ENCODE measurements at regions of chr13 and their contacts with region 1.

Region 1: DNA sequence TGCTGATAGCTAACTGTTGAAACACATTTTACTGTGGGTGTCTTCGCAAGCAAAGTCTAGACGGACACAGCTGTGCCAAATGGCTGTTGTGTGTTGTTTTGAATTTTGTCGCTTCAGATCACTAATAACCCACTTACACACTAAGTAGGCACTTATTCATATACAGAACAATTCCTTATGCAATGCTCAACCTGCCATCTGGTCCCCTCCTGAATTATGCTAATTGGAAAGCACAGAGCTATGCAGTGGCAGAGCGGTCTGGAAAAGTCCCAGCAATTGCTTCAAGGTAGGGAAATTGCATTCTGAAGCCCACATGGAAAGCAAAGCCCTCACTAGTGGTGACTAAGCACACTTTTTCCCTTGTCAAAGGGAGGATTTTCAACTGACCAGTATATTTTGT is 69.9 kb downstream of the C13orf42 start:
- DNase-seq: no peak
- H3K4me3 Mint-ChIP-seq: no peak overlapping the region
- H3K27ac Mint-ChIP-seq: no peak overlapping the region
- H3K4me1 Mint-ChIP-seq: no peaks in the 10 kb centered on the region
- H3K27me3 Mint-ChIP-seq: no peaks in the 10 kb centered on the region

Region 2: DNA sequence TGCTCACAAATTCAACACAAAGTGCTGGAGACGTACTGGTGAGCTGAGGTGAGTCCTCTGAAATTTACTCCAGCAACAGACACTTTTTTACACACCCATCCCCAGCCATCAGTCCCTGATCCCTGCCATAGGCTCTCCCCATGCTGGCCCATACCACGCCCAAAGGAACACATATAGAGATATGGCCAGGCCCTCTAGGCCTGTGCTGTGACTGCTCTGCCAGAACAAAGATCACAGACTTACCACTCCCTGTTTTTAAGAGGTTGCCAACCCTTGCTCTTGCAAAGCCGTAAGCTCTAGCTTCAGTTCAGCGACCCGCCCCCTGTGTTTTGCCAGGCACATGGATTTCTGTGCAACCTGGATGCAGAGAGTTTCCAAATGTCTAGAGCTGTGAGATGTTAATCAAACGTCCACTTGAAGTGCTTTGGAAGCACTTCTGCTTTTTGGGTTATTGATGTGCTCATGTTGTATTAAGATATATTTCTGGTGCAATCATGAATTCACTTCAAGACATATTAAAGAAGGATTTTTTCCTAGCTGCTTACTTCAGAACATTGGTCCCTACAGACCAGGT is 257.3 kb before region 1 on chr13:
- CTCF ChIA-PET with region 1: no interaction called
- intact Hi-C with region 1: no loop called
- DNase-seq: no peak
- H3K4me3 Mint-ChIP-seq: no peak overlapping the region
- H3K27ac Mint-ChIP-seq: no peak overlapping the region
- H3K4me1 Mint-ChIP-seq: no peaks in the 10 kb centered on the region
- H3K27me3 Mint-ChIP-seq: no peaks in the 10 kb centered on the region

Region 3: DNA sequence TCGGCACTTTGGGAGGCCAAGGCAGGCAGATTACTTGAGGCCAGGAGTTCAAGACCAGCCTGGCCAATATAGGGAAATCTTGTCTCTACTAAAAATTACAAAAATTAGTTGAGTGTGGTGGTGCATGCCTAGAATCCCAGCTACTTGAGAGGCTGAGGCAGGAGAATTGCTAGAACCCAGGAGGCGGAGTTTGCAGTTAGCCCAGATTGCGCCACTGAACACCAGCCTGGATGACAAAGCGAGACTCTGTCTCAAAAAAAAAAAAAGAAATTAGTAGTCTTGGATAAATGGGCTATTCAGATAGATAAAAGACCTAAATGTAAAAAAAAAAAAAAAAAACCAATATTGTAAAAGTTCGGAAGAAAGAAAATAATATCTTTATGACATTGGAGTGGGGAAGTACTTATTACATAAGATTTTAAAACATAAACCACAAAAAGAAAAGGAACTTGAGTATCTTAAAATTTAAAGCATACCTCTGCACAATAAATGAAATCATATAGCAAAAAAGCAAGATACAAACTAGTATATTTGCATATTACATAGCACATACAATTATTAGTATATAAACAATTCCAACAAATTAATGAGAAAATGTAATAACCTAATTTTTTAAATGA is 158.2 kb before region 1 on chr13:
- CTCF ChIA-PET with region 1: no interaction called
- intact Hi-C with region 1: no loop called
- DNase-seq: no peak
- H3K4me3 Mint-ChIP-seq: no peak overlapping the region
- H3K27ac Mint-ChIP-seq: no peak overlapping the region
- H3K4me1 Mint-ChIP-seq: no peaks in the 10 kb centered on the region
- H3K27me3 Mint-ChIP-seq: peaks cover 2% of the 10 kb centered on the region

Region 4: GRCh38 chr13:51083706-51084105 is 42.6 kb after region 1 on chr13:
- CTCF ChIA-PET with region 1: no interaction called
- intact Hi-C with region 1: loop called (anchors 1 kb)
- DNase-seq: no peak
- H3K4me3 Mint-ChIP-seq: no peak overlapping the region
- H3K27ac Mint-ChIP-seq: no peak overlapping the region
- H3K4me1 Mint-ChIP-seq: no peaks in the 10 kb centered on the region
- H3K27me3 Mint-ChIP-seq: no peaks in the 10 kb centered on the region

Measured in activated naive CD4-positive, alpha-beta T cell treated with anti-CD3 and anti-CD28 coated beads for 36 hours (primary cell).